IMR-90 (cell line): ENCODE measurements at regions of chr4 and their contacts with region 1.

Region 1: DNA sequence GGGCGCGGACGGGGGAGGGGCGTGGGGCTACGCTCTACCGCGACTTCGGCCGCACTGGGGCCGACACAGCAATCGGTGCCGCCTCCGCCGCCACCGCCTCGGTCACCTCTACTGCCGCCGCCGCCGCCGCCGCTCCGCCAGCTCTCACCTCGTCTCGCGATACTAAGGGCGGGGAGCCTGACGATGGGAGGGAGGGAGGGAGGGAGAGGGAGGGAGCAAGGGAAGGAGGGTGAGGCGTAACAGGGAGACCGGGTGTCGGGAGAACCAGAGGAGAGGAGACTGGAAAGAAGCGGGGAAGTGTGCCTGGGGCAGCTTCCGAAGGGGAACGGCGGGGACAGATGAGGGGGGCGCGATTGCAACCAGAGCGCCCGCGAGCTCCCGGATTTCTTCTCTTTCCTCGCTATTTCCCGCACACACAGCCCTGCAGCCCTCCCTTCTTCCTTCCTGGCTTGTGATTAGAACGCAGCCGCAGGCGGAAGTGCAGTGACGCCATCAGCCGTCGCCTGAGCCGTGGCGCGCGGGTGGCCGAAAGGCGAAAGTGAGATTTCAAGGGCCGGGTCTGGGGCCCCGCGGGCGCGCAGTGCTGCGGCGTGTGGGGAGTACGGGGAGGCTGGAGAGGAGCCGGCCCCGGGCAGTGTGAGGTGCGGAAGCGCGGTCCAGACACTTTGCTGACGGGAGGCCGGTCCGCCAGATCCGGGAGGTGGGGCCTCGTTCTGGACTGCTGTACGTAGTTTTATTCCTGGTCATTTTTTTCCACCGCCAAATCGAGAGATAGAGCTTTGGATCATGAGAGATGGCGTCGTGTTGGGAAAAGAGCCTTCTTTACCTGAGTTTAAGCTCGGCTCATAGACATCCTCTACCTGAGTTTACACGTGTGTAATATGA is at the start of gene ANKRD17:
- DNase-seq: peak; percentile 91
- ATAC-seq: peak; percentile 81
- H3K4me3 ChIP-seq: peak within 1 kb of the TSS; percentile 83
- H3K27ac ChIP-seq: peak within 1 kb of the TSS; percentile 96
- H3K4me1 ChIP-seq: no peaks in the 10 kb centered on the region
- H3K27me3 ChIP-seq: no peaks in the 10 kb centered on the region
- CTCF ChIP-seq: 0 out of 2 replicates have a peak, but pooled peaks have one; percentile 1
- POLR2A ChIP-seq: peak; percentile 93
- RAD21 ChIP-seq: 0 out of 2 replicates have a peak, but pooled peaks have one; percentile 25
- total RNA-seq, gene ANKRD17: 75.3 and 77.2 TPM in 2 replicates

Region 2: DNA sequence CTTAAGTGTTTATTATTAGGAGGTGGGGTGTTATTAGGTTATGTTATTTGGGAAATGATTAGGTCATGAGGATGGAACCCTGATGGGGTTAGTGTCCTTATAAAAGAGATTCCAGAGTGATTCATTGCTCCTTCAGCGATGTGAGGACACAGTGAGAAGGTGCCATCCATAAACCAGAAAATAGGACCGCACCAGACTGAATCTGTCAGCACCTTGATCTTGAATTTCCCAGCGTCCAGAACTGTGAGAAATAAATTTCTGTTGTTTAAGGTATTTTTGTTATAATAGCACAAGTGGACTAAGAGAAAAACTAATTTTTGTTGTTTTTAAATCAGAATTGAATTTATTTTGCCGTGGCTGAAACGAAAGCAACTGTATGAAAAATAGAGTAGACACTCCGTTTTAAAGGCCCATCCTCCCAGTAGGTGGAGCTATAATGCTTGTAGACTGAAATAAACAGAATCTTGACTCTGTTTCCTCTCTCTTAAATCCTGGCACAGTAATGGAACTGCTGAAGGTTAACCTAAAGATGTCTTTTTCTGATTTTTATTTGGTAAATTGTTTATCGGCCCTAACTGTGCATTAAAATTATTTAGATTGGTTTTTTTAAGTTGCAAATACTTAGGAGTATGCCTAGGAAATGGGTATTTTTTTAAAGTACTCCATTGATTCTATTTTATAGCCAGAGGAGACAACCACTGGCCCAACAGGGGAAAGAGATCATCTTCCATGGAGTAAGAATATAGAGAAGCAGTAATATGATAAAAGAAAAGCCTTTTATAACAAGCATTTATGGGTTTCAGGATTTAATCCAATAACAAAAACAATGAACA is 556.7 kb before region 1 on chr4:
- CTCF ChIA-PET with region 1: no interaction called
- POLR2A ChIA-PET with region 1: no interaction called
- dilution Hi-C with region 1: no loop called
- in situ Hi-C with region 1: no loop called
- intact Hi-C with region 1: loop called (anchors 5 kb)
- DNase-seq: peak; percentile 49
- ATAC-seq: peak; percentile 87
- H3K4me3 ChIP-seq: peak overlapping the region; percentile 45
- H3K27ac ChIP-seq: no peak overlapping the region
- H3K4me1 ChIP-seq: no peaks in the 10 kb centered on the region
- H3K27me3 ChIP-seq: no peaks in the 10 kb centered on the region
- CTCF ChIP-seq: peak; percentile 72
- POLR2A ChIP-seq: no peak
- RAD21 ChIP-seq: peak; percentile 62

Region 3: GRCh38 chr4:72909461-72909860 is 349.5 kb before region 1 on chr4:
- CTCF ChIA-PET with region 1: no interaction called
- POLR2A ChIA-PET with region 1: no interaction called
- dilution Hi-C with region 1: no loop called
- in situ Hi-C with region 1: no loop called
- intact Hi-C with region 1: no loop called
- DNase-seq: no peak
- ATAC-seq: no peak
- H3K4me3 ChIP-seq: no peak overlapping the region
- H3K27ac ChIP-seq: no peak overlapping the region
- H3K4me1 ChIP-seq: no peaks in the 10 kb centered on the region
- H3K27me3 ChIP-seq: no peaks in the 10 kb centered on the region
- CTCF ChIP-seq: 0 out of 2 replicates have a peak, but pooled peaks have one; percentile 10
- POLR2A ChIP-seq: no peak
- RAD21 ChIP-seq: 0 out of 2 replicates have a peak, but pooled peaks have one; percentile 6

Region 4: DNA sequence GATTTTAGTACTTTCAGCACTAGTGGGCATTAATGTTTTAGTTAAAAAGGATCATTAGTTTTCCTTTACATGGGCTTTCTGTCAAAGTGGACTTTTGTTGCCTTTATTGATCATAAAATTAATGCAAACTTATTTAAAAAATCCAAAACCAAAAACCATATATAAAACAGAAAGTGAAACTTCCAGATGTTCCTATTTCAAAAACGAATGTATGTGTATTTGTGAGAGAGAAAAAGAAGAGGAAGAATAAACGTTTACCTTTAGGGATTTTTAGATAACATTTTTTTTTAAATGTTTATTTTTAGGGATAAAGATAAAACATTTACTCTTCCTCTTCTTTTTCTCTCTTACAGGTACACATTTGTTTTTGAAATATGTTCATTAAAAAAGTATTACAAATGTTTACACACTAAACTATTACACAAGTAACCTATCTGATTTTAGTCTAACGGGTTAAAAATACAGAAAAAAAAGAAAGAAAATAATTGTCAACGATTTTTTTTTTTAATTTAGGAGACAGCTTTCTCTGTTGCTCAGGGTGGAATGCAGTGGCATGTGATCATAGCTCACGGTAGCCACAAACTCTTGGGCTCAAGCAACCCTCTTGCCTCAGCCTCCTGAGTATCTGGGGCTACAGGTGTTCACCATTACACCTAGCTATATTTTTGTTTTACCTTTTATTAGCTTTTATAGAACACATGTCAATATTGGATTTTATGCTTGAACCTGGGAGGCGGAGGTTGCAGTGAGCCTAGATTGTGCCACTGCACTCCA is 172.6 kb before region 1 on chr4:
- CTCF ChIA-PET with region 1: interaction called, 9 read pairs
- POLR2A ChIA-PET with region 1: no interaction called
- dilution Hi-C with region 1: no loop called
- in situ Hi-C with region 1: no loop called
- intact Hi-C with region 1: loop called (anchors 5 kb)
- DNase-seq: no peak
- ATAC-seq: no peak
- H3K4me3 ChIP-seq: no peak overlapping the region
- H3K27ac ChIP-seq: no peak overlapping the region
- H3K4me1 ChIP-seq: 0 out of 2 replicates have a peak, but pooled peaks cover 1% of the 10 kb centered on the region
- H3K27me3 ChIP-seq: no peaks in the 10 kb centered on the region
- CTCF ChIP-seq: no peak
- POLR2A ChIP-seq: no peak
- RAD21 ChIP-seq: no peak

Region 5: GRCh38 chr4:73142995-73143547 is 115.9 kb before region 1 on chr4:
- CTCF ChIA-PET with region 1: no interaction called
- POLR2A ChIA-PET with region 1: no interaction called
- dilution Hi-C with region 1: no loop called
- in situ Hi-C with region 1: loop called (anchors 10 kb)
- intact Hi-C with region 1: loop called (anchors 5 kb)
- DNase-seq: no peak
- ATAC-seq: no peak
- H3K4me3 ChIP-seq: no peak overlapping the region
- H3K27ac ChIP-seq: no peak overlapping the region
- H3K4me1 ChIP-seq: no peaks in the 10 kb centered on the region
- H3K27me3 ChIP-seq: no peaks in the 10 kb centered on the region
- CTCF ChIP-seq: peak; percentile 31; the same call in 1 of the 2 replicates
- POLR2A ChIP-seq: no peak
- RAD21 ChIP-seq: no peak

Region 6: DNA sequence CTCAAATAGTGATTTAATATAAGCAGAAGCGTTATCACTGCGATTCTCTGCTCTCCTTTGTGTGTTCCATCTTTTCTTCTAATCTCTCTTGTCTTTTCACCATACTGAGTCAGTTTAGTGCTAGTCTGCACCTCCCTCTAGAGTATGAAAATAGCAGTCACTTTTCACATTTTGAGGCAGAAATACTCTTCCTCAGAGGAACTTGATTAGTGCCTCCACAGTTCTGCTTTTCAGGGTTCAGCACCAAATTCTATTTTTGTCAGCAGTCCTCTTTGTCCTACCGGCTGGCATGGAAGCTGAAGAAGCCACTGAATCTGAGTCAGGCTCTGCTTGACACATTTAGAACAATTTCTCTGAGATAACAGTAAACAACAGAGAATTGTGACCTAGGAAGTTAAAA is 49.4 kb after region 1 on chr4:
- CTCF ChIA-PET with region 1: interaction called, 4 read pairs
- POLR2A ChIA-PET with region 1: interaction called, 3 read pairs
- dilution Hi-C with region 1: no loop called
- in situ Hi-C with region 1: no loop called
- intact Hi-C with region 1: loop called (anchors 1 kb)
- DNase-seq: peak; percentile 61
- ATAC-seq: peak; percentile 59
- H3K4me3 ChIP-seq: no peak overlapping the region
- H3K27ac ChIP-seq: peak overlapping the region; percentile 84
- H3K4me1 ChIP-seq: peaks cover 4% of the 10 kb centered on the region
- H3K27me3 ChIP-seq: no peaks in the 10 kb centered on the region
- CTCF ChIP-seq: peak; percentile 64
- POLR2A ChIP-seq: no peak
- RAD21 ChIP-seq: peak; percentile 75

Region 7: GRCh38 chr4:73662709-73663546 is 404.0 kb after region 1 on chr4:
- CTCF ChIA-PET with region 1: no interaction called
- POLR2A ChIA-PET with region 1: no interaction called
- dilution Hi-C with region 1: no loop called
- in situ Hi-C with region 1: no loop called
- intact Hi-C with region 1: loop called (anchors 5 kb)
- DNase-seq: peak; percentile 77
- ATAC-seq: peak; percentile 64
- H3K4me3 ChIP-seq: no peak overlapping the region
- H3K27ac ChIP-seq: no peak overlapping the region; the same call in 1 of the 2 replicates
- H3K4me1 ChIP-seq: peaks cover 6% of the 10 kb centered on the region
- H3K27me3 ChIP-seq: no peaks in the 10 kb centered on the region
- CTCF ChIP-seq: peak; percentile 72
- POLR2A ChIP-seq: no peak
- RAD21 ChIP-seq: peak; percentile 87